Posterior cingulate gyrus (tissue), 11 donors: ENCODE measurements at regions of chr13 and their contacts with region 1.

Region 1: GRCh38 chr13:23871616-23872220 is 17.5 kb downstream of the MIPEP start:
- DNase-seq: no peak

Region 2: GRCh38 chr13:23466144-23467002 is 405.3 kb before region 1 on chr13:
- intact Hi-C with region 1: loop called (anchors 2 kb)
- DNase-seq: peak; percentile 51 to 96 (median 76)

Region 3: DNA sequence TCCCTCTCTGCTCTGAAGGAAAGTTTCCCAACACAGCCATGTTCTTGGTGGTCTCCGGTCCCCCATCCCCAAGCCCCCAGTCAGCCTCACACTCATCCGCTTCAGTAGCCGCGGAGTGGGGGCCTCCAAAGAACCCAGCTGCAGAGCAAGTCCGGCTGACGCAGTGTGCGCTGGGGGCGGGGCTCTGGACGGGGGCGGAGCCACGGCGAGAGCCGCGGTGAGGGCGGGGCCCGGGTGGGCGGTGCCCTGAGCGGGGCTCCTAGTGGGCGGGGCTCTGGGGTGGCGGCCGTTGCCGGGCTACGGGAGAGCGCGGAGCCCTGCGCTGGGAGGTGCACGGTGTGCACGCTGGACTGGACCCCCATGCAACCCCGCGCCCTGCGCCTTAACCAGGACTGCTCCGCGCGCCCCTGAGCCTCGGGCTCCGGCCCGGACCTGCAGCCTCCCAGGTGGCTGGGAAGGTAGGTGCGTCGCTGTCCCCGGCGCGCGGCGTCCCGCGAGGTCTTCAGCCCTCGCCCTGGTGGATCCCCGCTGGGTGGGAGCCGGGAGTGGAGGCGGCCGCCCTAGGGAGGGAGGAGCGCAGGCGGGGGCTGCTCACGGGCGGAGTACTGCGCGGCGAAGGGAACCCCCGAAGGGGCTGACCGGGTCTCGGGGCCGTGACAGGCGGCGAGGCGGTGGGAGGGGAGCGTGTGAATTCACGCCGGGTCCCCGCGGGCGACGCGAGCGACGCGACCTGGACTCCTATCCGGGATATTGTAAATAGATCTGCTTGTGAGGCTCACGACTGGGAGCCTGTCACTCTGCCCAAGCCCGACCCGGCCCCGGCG is 292.4 kb before region 1 on chr13:
- intact Hi-C with region 1: loop called (anchors 10 kb)
- DNase-seq: peak; percentile 79 to 98 (median 88)

Region 4: DNA sequence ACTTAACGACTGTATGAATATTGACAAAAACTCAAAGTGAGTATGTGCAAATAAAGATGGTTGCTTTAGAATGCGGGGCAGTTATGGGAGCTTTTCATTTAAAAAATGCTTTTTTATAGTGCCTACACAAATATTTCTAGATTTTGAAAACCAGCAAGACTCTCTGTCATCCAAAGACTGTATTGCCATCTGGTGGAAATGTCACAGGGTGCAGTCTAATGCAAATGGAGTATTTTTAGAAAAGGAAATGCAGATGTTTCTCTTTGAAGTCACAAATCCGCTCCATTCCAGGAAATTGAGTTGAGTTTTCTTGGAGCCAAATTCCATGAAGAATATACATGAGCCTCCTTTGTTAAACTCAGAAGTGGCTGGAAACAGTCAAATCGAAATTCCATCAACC is 27.8 kb after region 1 on chr13:
- intact Hi-C with region 1: loop called (anchors 1 kb)
- DNase-seq: peak in 2 of 10 donors; percentile 17 to 44

Region 5: DNA sequence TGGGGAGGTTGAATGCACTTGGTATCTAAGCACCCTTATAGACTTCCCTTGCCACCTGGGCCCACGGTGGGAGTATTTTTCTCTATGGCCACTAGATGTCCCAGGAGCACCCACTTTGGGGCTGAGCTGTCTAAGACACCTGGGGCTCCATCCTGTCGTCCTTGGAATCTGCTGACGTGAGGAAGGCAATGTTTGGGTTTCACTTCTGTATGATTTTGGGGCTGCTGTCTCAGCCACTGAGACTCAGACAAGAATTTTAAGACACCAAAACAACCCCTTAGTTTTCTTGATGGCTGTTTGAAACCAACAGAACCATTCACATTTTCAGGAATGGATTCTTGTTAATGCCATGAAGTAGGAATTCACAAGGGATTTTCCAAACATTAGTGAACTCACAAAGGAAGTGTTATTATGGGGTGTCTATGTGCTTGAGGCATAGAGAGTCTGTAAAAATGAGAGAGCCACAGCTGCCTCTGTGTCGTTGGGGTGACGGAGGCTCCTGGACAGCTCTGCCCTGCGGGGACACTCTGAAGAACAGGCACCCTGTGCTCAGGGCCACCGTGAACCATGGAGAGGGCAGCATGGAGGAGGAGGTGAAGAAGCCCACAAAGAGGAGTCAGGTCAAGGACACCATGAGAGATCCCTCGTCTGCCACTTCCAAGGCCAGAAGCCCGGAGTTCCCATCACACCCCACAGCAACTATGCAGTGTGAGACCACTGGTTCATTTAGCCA is 182.0 kb after region 1 on chr13:
- intact Hi-C with region 1: no loop called
- DNase-seq: peak in 8 of 10 donors; percentile 62 to 93 (median 70)